OCI-LY7 (cell line): ENCODE measurements at regions of chr3 and their contacts with region 1.

Region 1: GRCh38 chr3:62622553-62623193 is 249.3 kb upstream of the FEZF2 start:
- DNase-seq: peak; percentile 66
- H3K4me3 ChIP-seq: no peak overlapping the region
- H3K27ac ChIP-seq: no peak overlapping the region
- H3K4me1 ChIP-seq: peaks cover 5% of the 10 kb centered on the region
- CTCF ChIP-seq: peak; percentile 92

Region 2: GRCh38 chr3:62299857-62300406 is 322.7 kb before region 1 on chr3:
- CTCF ChIA-PET with region 1: no interaction called
- POLR2A ChIA-PET with region 1: no interaction called
- intact Hi-C with region 1: no loop called
- DNase-seq: no peak
- H3K4me3 ChIP-seq: no peak overlapping the region
- H3K27ac ChIP-seq: no peak overlapping the region
- H3K4me1 ChIP-seq: no peaks in the 10 kb centered on the region
- CTCF ChIP-seq: no peak

Region 3: GRCh38 chr3:62521464-62522400 is 100.9 kb before region 1 on chr3:
- CTCF ChIA-PET with region 1: no interaction called
- POLR2A ChIA-PET with region 1: no interaction called
- intact Hi-C with region 1: no loop called
- DNase-seq: no peak
- H3K4me3 ChIP-seq: no peak overlapping the region
- H3K27ac ChIP-seq: no peak overlapping the region
- H3K4me1 ChIP-seq: no peaks in the 10 kb centered on the region
- CTCF ChIP-seq: no peak

Region 4: DNA sequence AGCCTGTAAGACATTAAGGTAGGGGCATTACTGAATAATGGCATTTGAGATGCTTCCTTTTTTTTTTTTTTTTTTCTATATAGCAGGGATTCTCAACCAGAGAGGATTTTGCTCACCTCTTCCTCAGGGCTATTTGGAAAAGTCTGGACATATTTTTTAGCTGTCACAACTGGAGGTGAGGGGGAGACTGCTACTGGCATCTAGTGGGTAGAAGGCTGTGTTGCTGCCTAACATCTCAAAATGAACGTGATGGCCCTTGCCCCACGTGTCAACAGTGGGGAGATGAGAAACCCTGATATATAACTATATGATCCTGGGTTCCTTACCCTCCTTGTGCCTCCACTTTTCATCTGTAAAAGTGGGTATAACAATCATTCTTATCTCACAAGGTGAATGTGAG is 180.6 kb after region 1 on chr3:
- CTCF ChIA-PET with region 1: no interaction called
- POLR2A ChIA-PET with region 1: interaction called, 3 read pairs
- intact Hi-C with region 1: loop called (anchors 2 kb)
- DNase-seq: peak; percentile 80
- H3K4me3 ChIP-seq: no peak overlapping the region
- H3K27ac ChIP-seq: peak overlapping the region; percentile 75
- H3K4me1 ChIP-seq: peaks cover 95% of the 10 kb centered on the region
- CTCF ChIP-seq: peak; percentile 82

Region 5: GRCh38 chr3:63193629-63194028 is 571.0 kb after region 1 on chr3:
- CTCF ChIA-PET with region 1: no interaction called
- POLR2A ChIA-PET with region 1: no interaction called
- intact Hi-C with region 1: loop called (anchors 2 kb)
- DNase-seq: peak; percentile 61
- H3K4me3 ChIP-seq: no peak overlapping the region
- H3K27ac ChIP-seq: no peak overlapping the region
- H3K4me1 ChIP-seq: no peaks in the 10 kb centered on the region
- CTCF ChIP-seq: peak; percentile 91

Region 6: GRCh38 chr3:63228087-63229023 is 605.7 kb after region 1 on chr3:
- CTCF ChIA-PET with region 1: no interaction called
- POLR2A ChIA-PET with region 1: no interaction called
- intact Hi-C with region 1: loop called (anchors 2 kb)
- DNase-seq: peak; percentile 73
- H3K4me3 ChIP-seq: no peak overlapping the region
- H3K27ac ChIP-seq: no peak overlapping the region
- H3K4me1 ChIP-seq: peaks cover 4% of the 10 kb centered on the region
- CTCF ChIP-seq: peak; percentile 85

Region 7: DNA sequence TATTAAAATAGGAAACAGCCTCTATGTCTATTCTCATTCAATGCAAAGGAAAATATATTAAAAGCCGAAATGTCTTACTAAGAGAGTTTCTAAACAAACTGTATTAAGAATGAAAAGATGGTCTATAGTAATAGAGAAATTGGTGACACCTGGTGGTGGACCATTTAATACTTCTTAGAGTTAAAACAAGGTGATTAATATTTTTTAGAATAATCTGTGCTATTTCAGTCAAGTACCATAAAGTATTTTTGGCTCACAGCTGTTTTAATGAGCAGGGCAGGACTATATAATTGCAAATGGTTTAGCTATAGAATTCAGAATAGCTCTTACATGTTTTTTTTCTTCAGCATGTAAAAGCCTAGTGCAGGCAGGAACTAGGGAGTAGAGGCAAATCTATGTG is 711.2 kb after region 1 on chr3:
- CTCF ChIA-PET with region 1: no interaction called
- POLR2A ChIA-PET with region 1: no interaction called
- intact Hi-C with region 1: loop called (anchors 10 kb)
- DNase-seq: peak; percentile 7
- H3K4me3 ChIP-seq: no peak overlapping the region
- H3K27ac ChIP-seq: no peak overlapping the region
- H3K4me1 ChIP-seq: no peaks in the 10 kb centered on the region
- CTCF ChIP-seq: peak; percentile 70